Naive thymus-derived CD4-positive, alpha-beta T cell (primary cell): ENCODE measurements at regions of chr6 and their contacts with region 1.

Region 1: GRCh38 chr6:4936681-4937041 is 67.2 kb downstream of the RPP40 start:
- DNase-seq: peak in 5 of 9 donors; percentile 5 to 31 (median 25)
- ATAC-seq: peak; percentile 44
- H3K4me3 ChIP-seq: no peak overlapping the region
- H3K4me3 Mint-ChIP-seq: no peak overlapping the region
- H3K27ac ChIP-seq: no peak overlapping the region
- H3K27ac Mint-ChIP-seq: peak overlapping the region in 1 of 9 donors; percentile 17
- H3K4me1 ChIP-seq: peaks cover 0 to 3% of the 10 kb centered on the region in 2 donors
- H3K4me1 Mint-ChIP-seq: peaks cover 10 to 41% (median 22%) of the 10 kb centered on the region in 7 donors
- H3K27me3 ChIP-seq: no peaks in the 10 kb centered on the region
- H3K27me3 Mint-ChIP-seq: no peaks in the 10 kb centered on the region

Region 2: DNA sequence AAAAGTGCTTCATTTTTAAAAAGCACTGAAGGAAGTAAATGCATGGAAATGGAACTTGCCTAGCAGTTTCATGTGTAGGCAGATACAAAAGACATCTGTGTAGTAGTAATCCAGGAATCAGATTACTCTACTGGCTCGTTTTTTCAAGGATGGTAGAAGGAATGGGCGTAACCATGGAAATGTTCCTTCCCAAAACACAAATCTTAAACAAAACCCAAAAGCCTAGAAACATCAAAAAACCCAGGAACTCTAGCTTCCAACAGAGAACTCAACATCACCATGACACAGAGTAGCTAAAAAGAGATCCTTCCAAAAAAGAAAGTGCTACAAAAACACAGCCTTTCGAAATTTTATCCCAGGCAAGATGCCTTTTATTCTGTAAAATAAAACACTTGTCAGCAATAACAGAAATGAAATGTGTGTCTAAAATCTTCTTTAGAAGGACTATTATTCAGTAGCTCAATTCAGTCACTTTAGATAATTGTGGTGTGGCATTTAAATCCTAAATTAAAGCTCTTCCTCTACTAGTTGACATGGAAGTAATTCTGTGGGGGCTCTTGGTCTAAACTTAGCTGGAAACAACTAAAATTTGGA is 939.4 kb before region 1 on chr6:
- CTCF ChIA-PET with region 1: no interaction called
- POLR2A ChIA-PET with region 1: no interaction called
- intact Hi-C with region 1: no loop called
- DNase-seq: no peak
- ATAC-seq: no peak
- H3K4me3 ChIP-seq: no peak overlapping the region
- H3K4me3 Mint-ChIP-seq: no peak overlapping the region
- H3K27ac ChIP-seq: no peak overlapping the region
- H3K27ac Mint-ChIP-seq: peak overlapping the region in 1 of 9 donors; percentile 20
- H3K4me1 ChIP-seq: no peaks in the 10 kb centered on the region
- H3K4me1 Mint-ChIP-seq: peaks cover 8 to 44% (median 33%) of the 10 kb centered on the region in 7 donors
- H3K27me3 ChIP-seq: no peaks in the 10 kb centered on the region
- H3K27me3 Mint-ChIP-seq: no peaks in the 10 kb centered on the region

Region 3: DNA sequence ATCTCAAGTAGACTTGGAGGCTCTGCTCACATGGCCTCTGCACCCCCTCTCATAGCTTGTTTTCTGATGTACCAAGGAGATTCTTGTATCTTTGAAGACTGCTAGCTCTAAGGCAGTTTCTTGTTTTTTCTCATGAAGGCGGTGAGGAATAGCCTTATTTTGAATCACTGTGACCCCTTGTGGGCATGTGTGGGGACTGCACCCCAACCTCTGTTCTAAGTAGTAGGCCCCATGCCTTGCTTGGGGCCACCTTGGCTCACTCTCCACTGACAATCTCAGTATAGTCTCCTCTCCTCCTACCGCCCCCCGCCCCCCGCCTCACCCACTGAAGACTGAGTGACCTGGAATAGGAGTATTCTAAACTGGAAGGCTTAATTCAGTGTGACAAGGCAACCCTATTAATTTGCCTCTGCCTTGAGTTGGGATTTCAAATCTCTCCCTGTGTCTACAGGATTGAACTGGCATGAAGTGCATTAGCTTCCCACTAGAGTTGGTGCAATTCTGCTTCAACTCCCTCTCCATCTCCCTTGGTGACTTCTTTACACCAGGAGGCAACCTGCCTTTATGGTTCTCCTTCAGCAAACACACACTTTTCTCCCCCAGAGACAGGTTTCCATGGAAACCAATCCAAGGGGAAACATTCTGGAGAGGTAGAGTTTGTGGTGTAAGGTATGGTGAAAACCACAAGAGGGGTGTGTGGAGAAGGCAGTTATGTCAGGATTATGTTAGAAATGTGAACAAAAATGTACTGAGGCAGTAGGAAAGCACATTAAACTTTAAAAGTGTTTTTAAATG is 725.8 kb before region 1 on chr6:
- CTCF ChIA-PET with region 1: no interaction called
- POLR2A ChIA-PET with region 1: no interaction called
- intact Hi-C with region 1: loop called in 1 of 2 experiments (anchors 2 kb)
- DNase-seq: peak; percentile 17 to 56 (median 45)
- ATAC-seq: peak; percentile 86
- H3K4me3 ChIP-seq: no peak overlapping the region
- H3K4me3 Mint-ChIP-seq: peak overlapping the region in 5 of 10 donors; percentile 1 to 59 (median 25)
- H3K27ac ChIP-seq: no peak overlapping the region
- H3K27ac Mint-ChIP-seq: peak overlapping the region in 6 of 9 donors; percentile 14 to 70 (median 52)
- H3K4me1 ChIP-seq: peaks cover 0 to 16% of the 10 kb centered on the region in 2 donors
- H3K4me1 Mint-ChIP-seq: peaks cover 12 to 36% (median 23%) of the 10 kb centered on the region in 7 donors
- H3K27me3 ChIP-seq: no peaks in the 10 kb centered on the region
- H3K27me3 Mint-ChIP-seq: peaks cover 0 to 7% (median under 1%) of the 10 kb centered on the region in 5 donors

Region 4: GRCh38 chr6:4727671-4728435 is 208.8 kb before region 1 on chr6:
- CTCF ChIA-PET with region 1: no interaction called
- POLR2A ChIA-PET with region 1: no interaction called
- intact Hi-C with region 1: loop called in 1 of 2 experiments (anchors 1 kb)
- DNase-seq: peak in 1 of 9 donors; percentile 1
- ATAC-seq: peak; percentile 42
- H3K4me3 ChIP-seq: no peak overlapping the region
- H3K4me3 Mint-ChIP-seq: no peak overlapping the region
- H3K27ac ChIP-seq: no peak overlapping the region
- H3K27ac Mint-ChIP-seq: peak overlapping the region in 1 of 9 donors; percentile 17
- H3K4me1 ChIP-seq: no peaks in the 10 kb centered on the region
- H3K4me1 Mint-ChIP-seq: peaks cover 0 to 15% (median 6%) of the 10 kb centered on the region in 7 donors
- H3K27me3 ChIP-seq: no peaks in the 10 kb centered on the region
- H3K27me3 Mint-ChIP-seq: peaks cover 4 to 26% (median 16%) of the 10 kb centered on the region in 5 donors

Region 5: GRCh38 chr6:5003604-5004372 is 67.1 kb after region 1 on chr6 and contains the start of gene RPP40:
- CTCF ChIA-PET with region 1: no interaction called
- POLR2A ChIA-PET with region 1: no interaction called
- intact Hi-C with region 1: loop called in 1 of 2 experiments (anchors 5 kb)
- DNase-seq: peak; percentile 97 to 99 (median 99)
- ATAC-seq: peak; percentile 97
- H3K4me3 ChIP-seq: peak within 1 kb of the TSS; percentile 91
- H3K4me3 Mint-ChIP-seq: peak within 1 kb of the TSS; percentile 88 to 95 (median 94)
- H3K27ac ChIP-seq: peak within 1 kb of the TSS; percentile 82
- H3K27ac Mint-ChIP-seq: peak within 1 kb of the TSS; percentile 91 to 98 (median 94)
- H3K4me1 ChIP-seq: peaks cover 9% of the 10 kb centered on the region in 2 donors
- H3K4me1 Mint-ChIP-seq: peaks cover 0 to 20% (median 13%) of the 10 kb centered on the region in 7 donors
- H3K27me3 ChIP-seq: no peaks in the 10 kb centered on the region
- H3K27me3 Mint-ChIP-seq: no peaks in the 10 kb centered on the region
- total RNA-seq, gene RPP40: 3.8 to 8.0 (median 5.1) TPM